PC-9 (cell line): ENCODE measurements at regions of chrX and their contacts with region 1.

Region 1: DNA sequence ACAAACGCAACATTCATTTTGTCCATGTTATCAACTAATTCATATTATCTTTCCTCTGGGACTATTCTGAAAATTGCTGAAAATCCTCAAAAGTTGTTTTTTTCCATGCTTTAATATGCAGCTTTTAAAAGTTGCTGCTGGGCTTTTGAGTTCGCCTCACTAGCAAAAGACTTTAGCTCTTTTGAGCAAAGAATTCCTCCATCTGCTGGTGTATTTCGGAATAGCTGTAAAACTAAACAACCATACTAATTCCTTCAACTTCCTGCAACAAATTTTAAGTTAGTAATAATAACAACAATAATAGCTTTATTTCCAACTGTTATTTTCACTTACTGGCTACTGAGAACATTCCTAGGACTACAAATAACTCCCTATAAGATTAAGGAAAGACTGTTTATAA is 124.5 kb upstream of the PLAC1 start:
- DNase-seq: no peak
- H3K4me3 ChIP-seq: no peak overlapping the region
- H3K27ac ChIP-seq: no peak overlapping the region
- H3K4me1 ChIP-seq: no peaks in the 10 kb centered on the region
- H3K27me3 ChIP-seq: no peaks in the 10 kb centered on the region
- CTCF ChIP-seq: peak; percentile 81

Region 2: GRCh38 chrX:134423615-134424014 is 359.2 kb before region 1 on chrX:
- CTCF ChIA-PET with region 1: interaction called, 7 read pairs
- POLR2A ChIA-PET with region 1: interaction called, 5 read pairs
- intact Hi-C with region 1: loop called (anchors 5 kb)
- DNase-seq: no peak
- H3K4me3 ChIP-seq: no peak overlapping the region
- H3K27ac ChIP-seq: no peak overlapping the region
- H3K4me1 ChIP-seq: no peaks in the 10 kb centered on the region
- H3K27me3 ChIP-seq: no peaks in the 10 kb centered on the region
- CTCF ChIP-seq: peak; percentile 71

Region 3: DNA sequence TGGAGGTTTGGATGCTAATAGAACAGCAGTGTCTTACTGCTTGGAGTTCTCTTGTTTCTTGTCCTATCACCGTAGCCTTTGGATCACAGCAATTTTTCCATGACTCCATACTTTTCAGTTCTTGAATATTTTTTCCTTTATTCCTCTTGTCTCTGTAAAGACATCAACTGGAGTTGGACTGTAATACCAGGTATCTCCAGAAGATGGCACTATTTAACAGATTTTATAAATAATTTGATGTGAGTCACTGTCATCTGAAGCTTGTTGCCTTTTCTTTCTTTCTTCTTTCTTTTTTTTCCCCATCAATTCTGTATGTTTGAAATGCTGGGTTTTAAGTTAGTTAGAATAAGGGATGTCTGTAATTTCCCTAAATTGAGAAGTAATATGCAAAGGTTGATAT is 298.8 kb before region 1 on chrX:
- CTCF ChIA-PET with region 1: interaction called, 7 read pairs
- POLR2A ChIA-PET with region 1: no interaction called
- intact Hi-C with region 1: loop called (anchors 1 kb)
- DNase-seq: peak in 1 of 2 experiments; percentile 62
- H3K4me3 ChIP-seq: no peak overlapping the region
- H3K27ac ChIP-seq: no peak overlapping the region
- H3K4me1 ChIP-seq: no peaks in the 10 kb centered on the region
- H3K27me3 ChIP-seq: no peaks in the 10 kb centered on the region
- CTCF ChIP-seq: peak; percentile 94

Region 4: DNA sequence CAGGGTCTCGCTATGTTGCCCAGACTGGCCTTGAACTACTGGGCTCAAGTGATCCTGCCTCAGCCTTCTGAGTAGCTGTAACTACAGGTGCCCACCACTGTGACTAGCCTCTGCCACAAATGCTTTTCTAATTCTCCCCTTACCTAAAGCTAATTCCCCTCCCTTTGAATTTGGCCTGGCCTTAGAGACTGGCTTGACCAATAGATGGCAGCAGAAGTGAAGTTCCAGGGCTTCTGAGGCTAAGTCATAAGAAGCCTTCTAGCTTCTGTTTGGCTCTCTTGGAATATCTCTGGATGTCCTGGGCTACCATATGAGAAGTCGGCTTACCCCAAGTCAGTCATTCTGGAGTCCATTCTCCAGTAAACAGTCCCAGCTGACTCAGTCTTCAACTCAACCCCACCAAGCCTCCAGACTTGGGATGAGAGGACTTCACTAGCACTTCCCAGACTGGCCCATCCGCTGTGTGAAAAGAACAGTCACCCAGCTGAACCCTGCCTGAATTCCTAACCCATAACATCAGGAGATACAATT is 261.9 kb before region 1 on chrX:
- CTCF ChIA-PET with region 1: interaction called, 3 read pairs
- POLR2A ChIA-PET with region 1: no interaction called
- intact Hi-C with region 1: loop called (anchors 1 kb)
- DNase-seq: peak; percentile 48 to 66
- H3K4me3 ChIP-seq: no peak overlapping the region
- H3K27ac ChIP-seq: no peak overlapping the region
- H3K4me1 ChIP-seq: peaks cover 11% of the 10 kb centered on the region; the same call in 1 of the 2 replicates
- H3K27me3 ChIP-seq: no peaks in the 10 kb centered on the region
- CTCF ChIP-seq: peak; percentile 78

Region 5: DNA sequence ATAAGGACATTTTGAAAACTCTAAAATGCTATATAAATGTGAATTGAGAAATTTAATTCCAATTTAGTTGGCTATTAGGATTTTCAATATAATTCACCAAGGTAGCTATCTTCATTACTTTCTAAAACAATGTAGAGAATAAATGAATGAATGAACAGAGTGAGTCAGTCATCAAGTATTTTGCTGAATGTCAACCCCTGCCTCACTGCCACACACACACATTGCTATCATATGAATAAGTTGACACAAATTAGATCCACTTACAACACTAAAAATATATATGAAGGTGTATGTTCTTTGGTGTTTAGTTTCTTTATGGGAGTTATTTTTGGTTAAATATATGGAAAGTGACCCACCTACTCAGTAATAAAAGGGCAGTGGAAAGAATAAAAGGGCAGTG is 66.6 kb after region 1 on chrX:
- CTCF ChIA-PET with region 1: no interaction called
- POLR2A ChIA-PET with region 1: interaction called, 19 read pairs
- intact Hi-C with region 1: no loop called
- DNase-seq: peak in 1 of 2 experiments; percentile 72
- H3K4me3 ChIP-seq: no peak overlapping the region
- H3K27ac ChIP-seq: peak overlapping the region; percentile 33; the same call in 1 of the 2 replicates
- H3K4me1 ChIP-seq: peaks cover 18% of the 10 kb centered on the region
- H3K27me3 ChIP-seq: no peaks in the 10 kb centered on the region
- CTCF ChIP-seq: no peak

Region 6: GRCh38 chrX:135003876-135004623 is 221.3 kb after region 1 on chrX:
- CTCF ChIA-PET with region 1: interaction called, 7 read pairs
- POLR2A ChIA-PET with region 1: no interaction called
- intact Hi-C with region 1: loop called (anchors 5 kb)
- DNase-seq: peak; percentile 84 to 98
- H3K4me3 ChIP-seq: peak overlapping the region; percentile 65
- H3K27ac ChIP-seq: peak overlapping the region; percentile 39
- H3K4me1 ChIP-seq: peaks cover 35% of the 10 kb centered on the region
- H3K27me3 ChIP-seq: no peaks in the 10 kb centered on the region
- CTCF ChIP-seq: no peak

Region 7: DNA sequence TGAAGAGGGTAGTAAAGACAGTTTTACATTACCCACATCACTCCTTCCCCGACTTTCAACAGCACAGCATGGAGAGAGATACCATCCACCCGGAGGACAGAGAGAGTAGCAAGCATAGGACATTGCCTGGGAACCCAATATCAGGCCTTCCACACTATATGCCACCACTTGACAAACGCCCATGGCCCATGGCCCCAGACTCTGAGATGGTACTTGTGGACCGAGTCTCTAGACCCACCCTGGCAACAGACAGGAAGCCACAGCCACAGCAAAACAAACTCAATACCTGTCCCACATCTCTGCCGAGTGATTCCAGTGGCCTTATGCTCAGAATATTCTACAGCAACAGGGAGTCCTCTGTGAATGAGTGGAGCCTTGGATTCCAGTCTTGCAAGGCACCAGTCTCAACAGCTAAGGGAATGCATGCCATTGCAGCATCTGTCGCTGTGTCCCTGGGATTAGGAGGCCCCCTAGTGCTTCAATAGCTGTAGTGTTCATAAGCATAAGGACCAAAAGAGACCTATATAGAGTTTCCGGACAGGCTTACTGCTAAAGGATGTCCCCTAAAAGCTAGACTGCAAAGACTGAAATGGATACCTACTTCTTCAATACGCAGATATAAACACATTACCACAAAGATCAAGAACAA is 403.1 kb after region 1 on chrX:
- CTCF ChIA-PET with region 1: no interaction called
- POLR2A ChIA-PET with region 1: no interaction called
- intact Hi-C with region 1: loop called (anchors 5 kb)
- DNase-seq: peak; percentile 37 to 38
- H3K4me3 ChIP-seq: no peak overlapping the region
- H3K27ac ChIP-seq: no peak overlapping the region
- H3K4me1 ChIP-seq: no peaks in the 10 kb centered on the region
- H3K27me3 ChIP-seq: peaks cover 72% of the 10 kb centered on the region
- CTCF ChIP-seq: peak; percentile 71